Lower leg skin (tissue), 4 donors: ENCODE measurements at regions of chr10 and their contacts with region 1.

Region 1: GRCh38 chr10:26474026-26474425 is 35.9 kb downstream of the APBB1IP start:
- DNase-seq: peak in 1 of 2 donors; percentile 34
- H3K4me3 ChIP-seq: no peak overlapping the region
- CTCF ChIP-seq: no peak
- POLR2A ChIP-seq: no peak

Region 2: DNA sequence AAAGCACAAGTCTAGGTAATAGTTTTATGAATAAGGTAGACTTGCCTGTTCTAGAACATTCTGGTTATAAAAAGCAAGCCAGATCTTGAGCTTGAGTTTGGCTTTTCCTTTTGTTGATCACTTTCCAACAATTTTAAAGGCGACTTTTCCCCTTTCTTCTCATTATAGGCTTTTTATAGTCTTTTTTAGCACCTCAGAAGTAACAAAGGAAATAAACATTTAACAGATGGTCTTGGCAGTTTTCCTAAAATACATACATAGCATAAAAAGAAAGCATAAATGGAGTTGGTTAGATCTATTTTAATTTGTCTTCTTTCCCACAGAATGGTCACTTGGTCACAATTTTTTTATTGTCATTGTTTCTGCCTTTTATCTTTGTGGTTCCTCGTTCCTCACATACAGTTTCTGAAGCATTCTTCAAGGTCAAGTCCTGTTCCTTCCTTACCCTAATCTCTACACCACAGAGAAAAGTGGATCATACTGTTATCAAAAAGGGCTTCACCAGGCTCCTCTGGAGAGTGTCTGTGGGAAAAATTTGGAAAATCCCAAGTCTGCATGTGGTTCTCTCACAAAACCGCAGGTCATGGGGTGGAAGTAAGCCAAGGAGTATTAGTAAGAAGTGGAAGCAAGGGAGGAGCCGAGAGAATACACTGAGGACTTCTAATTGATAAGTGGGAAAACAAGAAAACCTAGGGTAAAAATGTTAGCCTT is 1426.3 kb before region 1 on chr10:
- intact Hi-C with region 1: loop called (anchors 5 kb)
- DNase-seq: peak in 1 of 2 donors; percentile 29
- H3K4me3 ChIP-seq: no peak overlapping the region
- CTCF ChIP-seq: no peak
- POLR2A ChIP-seq: no peak

Region 3: DNA sequence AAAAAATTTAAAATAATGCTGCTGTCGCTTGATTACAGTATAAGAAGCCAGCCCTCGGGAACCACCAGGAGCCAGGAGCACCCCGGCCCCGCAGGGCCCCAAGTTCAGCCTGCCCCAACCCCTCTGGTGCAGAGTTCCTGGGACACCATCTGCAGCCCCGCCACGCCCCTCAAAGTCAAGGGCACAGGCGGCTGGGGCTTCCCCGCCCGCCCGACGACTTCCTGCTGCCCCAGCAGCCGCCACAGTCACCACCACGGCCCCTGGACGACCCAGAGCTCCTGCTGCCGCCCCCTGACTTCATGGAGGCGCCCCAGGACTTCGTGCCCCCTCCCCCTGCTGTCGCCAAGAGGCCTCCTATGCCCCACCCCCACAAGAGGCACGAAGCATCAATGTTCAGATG is 119.9 kb after region 1 on chr10:
- intact Hi-C with region 1: no loop called
- DNase-seq: no peak
- H3K4me3 ChIP-seq: no peak overlapping the region
- CTCF ChIP-seq: no peak
- POLR2A ChIP-seq: no peak

Region 4: GRCh38 chr10:26653004-26653403 is 179.0 kb after region 1 on chr10:
- intact Hi-C with region 1: no loop called
- DNase-seq: no peak
- H3K4me3 ChIP-seq: no peak overlapping the region
- CTCF ChIP-seq: no peak
- POLR2A ChIP-seq: no peak